ENCODE measurements at regions of chr5 and their contacts with region 1.

Region 1: GRCh38 chr5:96614110-96614691 is 48.0 kb upstream of the CAST start:
- DNase-seq: peak; percentile 53 to 58
- H3K4me3 ChIP-seq: no peak overlapping the region
- H3K27ac ChIP-seq: peak overlapping the region in 2 of 3 donors; percentile 24 to 70
- H3K4me1 ChIP-seq: peaks cover 0 to 2% of the 10 kb centered on the region in 2 donors
- H3K27me3 ChIP-seq: no peaks in the 10 kb centered on the region
- CTCF ChIP-seq: peak in 5 of 6 experiments; percentile 46 to 80 (median 49)
- POLR2A ChIP-seq: no peak

Region 2: DNA sequence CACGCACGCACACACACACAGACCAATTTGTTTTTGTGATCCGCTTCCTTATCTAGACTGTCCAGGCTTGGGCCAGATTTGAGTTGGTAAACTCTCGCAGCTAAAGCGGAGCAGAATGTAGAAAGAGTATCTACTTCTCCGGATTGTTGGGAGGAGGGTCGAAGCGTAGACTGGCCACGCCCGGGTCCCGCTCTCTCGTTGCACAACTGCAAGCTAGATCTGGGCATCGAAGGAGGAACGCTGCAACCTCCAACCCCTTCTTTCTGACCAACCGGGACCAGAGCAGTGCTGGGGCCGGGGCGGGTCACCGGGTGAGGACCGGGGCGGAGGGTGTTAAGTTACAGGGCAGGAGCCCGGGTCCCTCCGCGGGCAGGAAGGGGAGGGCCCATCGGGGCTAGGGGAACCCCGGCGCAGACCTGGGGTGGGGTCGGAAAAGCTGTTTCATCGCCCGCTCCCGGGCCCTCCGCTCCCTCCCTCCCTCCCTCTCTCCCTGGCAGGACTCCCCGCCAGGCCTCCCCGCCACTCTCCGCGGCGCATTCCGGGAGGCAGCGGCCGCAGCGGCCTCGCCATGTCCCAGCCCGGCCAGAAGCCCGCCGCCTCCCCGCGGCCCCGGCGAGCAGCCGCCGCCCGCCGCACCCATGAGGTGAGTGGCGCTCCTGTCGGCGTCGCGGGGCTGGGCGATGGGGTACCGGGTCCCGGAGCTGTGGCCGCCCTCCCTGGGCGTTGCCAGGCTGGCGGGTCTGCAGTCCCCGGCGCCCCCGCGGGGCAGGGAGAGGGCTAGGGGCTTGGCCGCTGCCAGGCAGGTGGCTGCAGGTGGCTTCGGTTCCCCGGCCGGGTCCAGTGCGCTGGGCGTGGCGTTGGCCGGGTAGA is 47.9 kb after region 1 on chr5 and contains the start of gene CAST:
- intact Hi-C with region 1: no loop called
- DNase-seq: peak; percentile 93 to 94
- H3K4me3 ChIP-seq: peak within 1 kb of the TSS; percentile 65 to 99 (median 96)
- H3K27ac ChIP-seq: peak within 1 kb of the TSS; percentile 92 to 99 (median 97)
- H3K4me1 ChIP-seq: peaks cover 0 to 7% of the 10 kb centered on the region in 2 donors
- H3K27me3 ChIP-seq: no peaks in the 10 kb centered on the region
- CTCF ChIP-seq: no peak
- POLR2A ChIP-seq: peak in 1 of 2 donors; percentile 75
- total RNA-seq, gene CAST: 177 to 278 (median 236) TPM

Region 3: DNA sequence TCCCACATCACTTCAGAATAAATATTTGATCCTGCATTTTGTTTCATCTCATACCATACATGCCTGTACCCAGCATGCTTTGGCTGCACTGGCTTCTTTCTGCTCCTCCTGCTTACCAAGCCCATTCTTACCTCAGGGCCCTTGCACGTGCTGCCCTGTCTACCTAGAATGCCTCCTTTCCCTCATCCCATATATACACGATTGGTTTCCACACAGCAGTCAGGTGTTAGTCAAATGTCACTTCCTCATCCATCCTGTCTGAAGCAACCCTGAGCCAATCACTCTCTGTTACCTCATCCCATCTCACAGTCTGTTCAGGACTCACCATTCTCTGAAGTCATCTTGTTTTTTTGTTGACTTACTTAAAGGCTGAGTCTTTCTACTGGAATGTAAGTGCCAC is 78.2 kb after region 1 on chr5:
- intact Hi-C with region 1: loop called (anchors 10 kb)
- DNase-seq: no peak
- H3K4me3 ChIP-seq: no peak overlapping the region
- H3K27ac ChIP-seq: no peak overlapping the region
- H3K4me1 ChIP-seq: no peaks in the 10 kb centered on the region
- H3K27me3 ChIP-seq: no peaks in the 10 kb centered on the region
- CTCF ChIP-seq: no peak
- POLR2A ChIP-seq: no peak

Region 4: GRCh38 chr5:96729156-96729555 is 115.0 kb after region 1 on chr5:
- intact Hi-C with region 1: loop called (anchors 10 kb)
- DNase-seq: no peak
- H3K4me3 ChIP-seq: no peak overlapping the region
- H3K27ac ChIP-seq: no peak overlapping the region
- H3K4me1 ChIP-seq: no peaks in the 10 kb centered on the region
- H3K27me3 ChIP-seq: no peaks in the 10 kb centered on the region
- CTCF ChIP-seq: peak in 3 of 6 experiments; percentile 32 to 41 (median 34)
- POLR2A ChIP-seq: no peak

Measured in thyroid gland (tissue), 4 donors.